Activated naive CD4-positive, alpha-beta T cell treated with anti-CD3 and anti-CD28 coated beads for 36 hours (primary cell): ENCODE measurements at regions of chr9 and their contacts with region 1.

Region 1: DNA sequence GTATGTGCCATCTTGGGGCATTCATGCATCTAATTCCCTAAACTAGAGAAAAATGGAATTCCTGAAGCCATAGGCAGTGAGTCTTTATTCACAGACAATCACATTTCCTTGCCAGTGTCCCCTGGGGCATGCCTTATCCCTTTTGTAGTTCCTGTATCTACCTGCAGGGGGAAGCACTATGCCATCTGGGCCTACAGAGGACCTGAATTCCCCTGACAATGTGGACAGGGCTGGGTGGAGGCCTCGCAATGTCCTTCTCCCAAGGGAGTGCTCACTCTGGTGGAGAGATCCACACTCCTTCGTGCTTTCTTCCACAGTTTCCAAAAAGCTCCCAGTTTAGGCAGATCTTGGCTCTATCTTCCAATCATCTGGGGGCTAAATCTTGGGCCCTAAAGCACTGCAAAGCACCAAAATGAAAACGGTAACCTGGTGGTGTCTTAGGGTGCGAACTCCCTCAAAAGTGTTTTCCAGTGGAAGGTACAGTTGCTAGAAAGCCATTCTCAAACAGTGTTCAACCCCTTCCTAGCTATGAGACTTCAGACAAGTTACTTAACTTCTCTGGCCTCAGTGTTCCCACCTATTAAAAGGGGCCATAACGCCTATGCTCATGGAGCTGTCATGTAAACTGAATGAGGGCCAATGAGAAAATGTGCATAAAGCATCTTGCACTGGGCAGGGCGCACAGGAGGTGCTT is 17.5 kb downstream of the WHRN start:
- DNase-seq: peak; percentile 81
- H3K4me3 Mint-ChIP-seq: no peak overlapping the region
- H3K27ac Mint-ChIP-seq: no peak overlapping the region
- H3K4me1 Mint-ChIP-seq: peaks cover 19% of the 10 kb centered on the region
- H3K27me3 Mint-ChIP-seq: no peaks in the 10 kb centered on the region

Region 2: DNA sequence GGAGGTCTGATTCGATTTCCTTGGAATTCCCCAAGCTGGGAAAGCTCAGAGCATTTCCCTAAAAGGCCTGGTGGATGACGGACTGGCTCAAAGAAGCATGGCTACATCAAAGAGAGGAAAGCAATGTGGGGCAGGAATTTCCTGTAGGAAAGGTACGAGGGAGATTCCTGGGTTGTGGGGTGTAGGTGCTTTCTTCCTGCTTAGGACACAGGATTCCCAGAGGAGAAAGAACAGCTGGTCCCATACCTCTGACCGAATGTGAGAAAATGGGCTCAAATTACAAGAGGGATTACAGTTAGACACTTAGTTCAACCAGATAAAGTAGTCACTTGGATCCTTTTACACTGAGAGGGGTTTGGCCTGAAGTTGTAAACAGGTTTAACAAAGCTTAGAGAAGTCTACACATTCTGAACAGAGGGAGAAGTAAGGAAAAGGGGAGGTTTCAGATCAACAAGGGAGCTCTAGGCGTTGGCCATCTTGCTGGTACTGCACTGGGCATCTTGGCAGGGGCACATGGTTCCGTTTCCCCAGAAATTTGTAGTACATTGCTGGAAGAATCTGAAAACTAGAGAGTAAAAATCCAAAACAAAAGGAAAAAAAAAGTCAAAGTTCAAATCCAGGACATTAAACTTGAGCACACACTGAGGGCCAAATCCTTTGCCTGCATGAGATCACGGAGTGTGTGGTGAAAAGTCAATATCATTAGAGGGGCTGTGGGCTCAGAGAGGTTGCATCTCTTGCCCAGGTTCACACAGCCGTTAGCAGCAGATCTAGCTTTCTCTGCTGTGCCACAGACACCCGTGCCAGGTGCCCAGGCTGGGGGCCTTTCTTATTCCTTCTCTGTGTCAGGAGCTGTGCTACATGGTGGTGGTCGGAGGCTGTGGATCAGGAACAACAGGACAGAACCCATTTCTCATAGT is 852.9 kb before region 1 on chr9:
- CTCF ChIA-PET with region 1: no interaction called
- intact Hi-C with region 1: no loop called
- DNase-seq: no peak
- H3K4me3 Mint-ChIP-seq: no peak overlapping the region
- H3K27ac Mint-ChIP-seq: no peak overlapping the region
- H3K4me1 Mint-ChIP-seq: peaks cover 2% of the 10 kb centered on the region
- H3K27me3 Mint-ChIP-seq: no peaks in the 10 kb centered on the region

Region 3: DNA sequence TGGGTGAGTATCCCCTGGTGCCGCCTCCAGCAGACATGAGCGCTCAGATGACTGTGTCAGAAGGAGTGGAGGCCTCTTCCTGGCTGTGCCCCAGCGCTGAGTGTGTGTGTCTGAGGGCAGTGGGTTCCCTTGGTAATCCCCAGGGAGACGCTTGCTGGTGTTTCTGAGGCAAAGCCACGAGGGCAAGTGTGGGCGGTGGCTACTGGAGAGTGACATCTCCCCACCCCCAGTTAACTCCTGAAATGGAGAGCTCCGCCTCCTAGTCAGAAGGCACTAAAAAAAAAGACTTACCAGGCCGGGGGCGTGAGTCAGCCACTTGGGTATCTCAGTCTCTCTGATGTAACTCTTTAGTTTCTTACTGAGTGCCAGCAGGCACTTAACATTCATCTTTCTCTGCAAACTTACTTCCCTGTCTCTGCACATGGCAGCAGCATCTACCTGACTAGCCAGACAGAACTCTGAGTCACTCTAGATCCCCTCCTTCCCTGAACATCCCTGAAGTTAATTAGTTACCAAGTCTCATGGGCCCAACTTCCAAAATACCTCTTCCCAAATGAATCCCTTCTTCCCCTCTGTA is 138.8 kb before region 1 on chr9:
- CTCF ChIA-PET with region 1: interaction called, 3 read pairs
- intact Hi-C with region 1: loop called (anchors 5 kb)
- DNase-seq: peak; percentile 98
- H3K4me3 Mint-ChIP-seq: peak overlapping the region; percentile 24
- H3K27ac Mint-ChIP-seq: peak overlapping the region; percentile 98
- H3K4me1 Mint-ChIP-seq: peaks cover 49% of the 10 kb centered on the region
- H3K27me3 Mint-ChIP-seq: no peaks in the 10 kb centered on the region

Region 4: GRCh38 chr9:114434878-114435311 is 52.9 kb before region 1 on chr9:
- CTCF ChIA-PET with region 1: interaction called, 4 read pairs
- intact Hi-C with region 1: loop called (anchors 5 kb)
- DNase-seq: peak; percentile 37
- H3K4me3 Mint-ChIP-seq: no peak overlapping the region
- H3K27ac Mint-ChIP-seq: no peak overlapping the region
- H3K4me1 Mint-ChIP-seq: peaks cover 2% of the 10 kb centered on the region
- H3K27me3 Mint-ChIP-seq: no peaks in the 10 kb centered on the region

Region 5: DNA sequence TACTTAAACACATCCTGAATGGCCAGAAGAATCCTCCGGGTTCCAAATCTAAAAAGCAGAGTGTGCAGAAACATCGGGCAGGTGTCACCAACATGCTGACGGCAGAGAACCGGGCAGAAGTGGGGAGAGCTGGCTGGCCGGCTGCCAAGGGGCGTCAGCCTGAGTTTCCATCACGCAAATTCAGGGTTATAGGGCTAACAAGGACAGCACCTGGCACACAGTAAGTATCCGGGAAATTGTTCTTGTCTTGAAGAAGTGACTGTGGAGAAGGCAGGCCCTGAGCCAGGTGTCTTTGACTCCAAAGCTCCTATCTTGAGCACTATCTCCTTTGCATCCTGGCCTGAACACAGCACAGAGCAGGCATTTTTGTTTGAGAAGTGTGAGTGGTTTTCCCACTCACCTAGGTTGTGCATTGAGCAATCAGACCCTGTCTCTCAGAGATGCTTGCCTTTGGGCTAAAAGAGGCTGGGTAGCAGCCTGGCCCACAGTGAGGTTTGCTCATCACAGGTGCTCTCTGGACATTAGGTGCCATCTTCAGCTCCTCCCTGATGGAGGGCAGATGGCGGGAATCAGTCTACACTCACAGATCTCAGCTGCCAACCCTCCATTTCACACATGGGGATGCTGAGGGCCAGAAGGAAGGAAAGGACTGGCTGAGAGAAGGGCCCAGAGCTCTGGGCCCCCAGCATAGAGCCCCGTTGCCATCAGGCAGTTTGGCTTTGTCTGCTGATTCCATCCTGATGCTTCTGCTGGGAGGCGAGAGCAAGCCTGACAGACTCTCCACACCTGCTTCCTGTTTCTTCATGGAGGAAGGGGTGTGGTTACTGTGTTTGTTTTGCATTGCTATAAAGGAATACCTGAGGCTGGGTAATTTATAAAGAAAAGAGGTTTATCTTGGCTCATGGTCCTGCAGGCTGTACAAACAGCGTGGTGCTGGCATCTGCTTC is 35.3 kb before region 1 on chr9:
- CTCF ChIA-PET with region 1: no interaction called
- intact Hi-C with region 1: loop called (anchors 1 kb)
- DNase-seq: peak; percentile 73
- H3K4me3 Mint-ChIP-seq: no peak overlapping the region
- H3K27ac Mint-ChIP-seq: peak overlapping the region; percentile 65
- H3K4me1 Mint-ChIP-seq: peaks cover 23% of the 10 kb centered on the region
- H3K27me3 Mint-ChIP-seq: no peaks in the 10 kb centered on the region

Region 6: DNA sequence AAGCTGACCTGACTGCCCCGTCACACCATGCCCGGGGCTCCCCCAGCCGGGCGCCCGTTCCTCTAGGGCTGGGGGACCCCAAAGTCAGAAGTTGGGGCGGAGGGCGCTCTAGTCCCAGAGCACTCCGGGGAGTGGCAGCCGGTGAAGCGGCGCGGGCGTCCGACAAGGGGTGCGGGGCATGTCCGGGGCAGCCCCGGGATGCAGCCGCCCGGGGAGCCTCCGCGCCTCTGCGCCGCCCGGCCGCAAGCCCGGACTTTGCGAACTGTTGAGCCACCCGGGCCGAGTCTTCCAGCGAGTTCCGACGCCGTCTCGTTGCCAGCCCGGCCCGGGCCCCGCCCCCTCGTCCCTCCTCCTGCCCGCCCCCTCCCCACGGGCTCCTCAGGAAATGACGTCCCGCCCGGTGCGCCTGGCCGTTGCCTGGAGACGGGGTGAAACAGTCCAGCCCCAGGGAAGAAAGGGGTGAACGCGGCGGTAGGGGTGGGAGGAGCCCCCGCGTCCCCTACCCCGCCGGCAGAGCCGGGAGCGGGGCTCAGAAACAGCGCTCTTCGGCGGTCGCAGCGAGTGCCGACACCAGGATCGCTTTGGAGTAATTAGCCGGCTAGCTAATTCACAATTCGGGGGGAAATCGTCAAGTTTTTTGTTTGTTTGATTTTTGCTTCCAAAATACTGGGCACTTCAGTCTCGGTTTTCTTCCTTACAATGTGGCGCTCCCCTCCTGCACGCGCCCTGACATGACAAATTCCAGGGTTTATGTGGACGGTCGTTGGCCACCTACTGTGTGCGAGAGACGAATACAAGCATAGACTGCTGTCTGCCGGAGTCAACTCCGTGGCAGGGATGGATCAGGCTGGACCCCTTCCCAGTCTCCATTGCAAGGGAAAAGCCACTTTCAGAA is 17.7 kb after region 1 on chr9 and contains the start of gene WHRN:
- CTCF ChIA-PET with region 1: interaction called, 34 read pairs
- intact Hi-C with region 1: loop called (anchors 1 kb)
- DNase-seq: peak; percentile 90
- H3K4me3 Mint-ChIP-seq: peak within 1 kb of the TSS; percentile 76
- H3K27ac Mint-ChIP-seq: no peak within 1 kb of the TSS
- H3K4me1 Mint-ChIP-seq: peaks cover 5% of the 10 kb centered on the region
- H3K27me3 Mint-ChIP-seq: peaks cover 15% of the 10 kb centered on the region
- total RNA-seq, gene WHRN: 1.9 to 2.1 TPM

Region 7: DNA sequence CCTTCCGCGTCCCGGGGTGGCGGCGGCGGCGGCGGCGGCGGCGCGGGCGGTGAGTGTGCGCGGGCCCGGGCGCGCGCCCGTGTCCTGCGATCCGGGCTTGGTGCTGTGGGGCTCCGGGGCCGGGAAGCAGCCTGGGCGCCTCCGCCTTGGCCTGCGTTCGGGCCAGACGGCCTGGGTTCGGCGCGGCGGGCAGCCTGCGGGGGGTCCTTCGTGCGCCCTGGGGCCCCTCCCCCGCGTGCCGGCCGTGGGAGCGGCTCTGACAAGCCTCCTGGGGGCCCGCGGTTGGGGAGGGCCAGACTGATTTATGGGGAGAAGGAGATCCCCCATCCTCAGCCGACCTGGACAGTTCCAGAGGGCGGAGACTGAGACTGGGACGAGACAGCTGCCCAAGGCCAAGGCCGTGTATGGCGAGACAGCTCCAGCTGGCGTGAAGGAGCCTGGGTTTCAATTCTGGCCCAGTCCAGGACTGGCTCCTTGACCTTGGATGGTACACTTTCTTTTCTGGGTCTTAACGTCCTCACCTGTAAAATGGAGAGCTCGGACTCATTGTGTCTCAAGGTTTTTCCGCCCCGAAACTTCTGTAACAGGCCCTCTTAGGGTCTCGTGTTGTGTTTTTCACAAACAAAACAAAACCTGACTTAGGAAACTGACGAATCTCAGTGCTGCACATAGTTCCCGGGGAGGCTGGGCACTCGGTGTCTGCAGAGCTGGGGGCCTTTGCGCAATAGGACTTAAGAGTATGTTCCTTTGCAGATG is 123.9 kb after region 1 on chr9:
- CTCF ChIA-PET with region 1: interaction called, 4 read pairs
- intact Hi-C with region 1: loop called (anchors 5 kb)
- DNase-seq: peak; percentile 37
- H3K4me3 Mint-ChIP-seq: peak overlapping the region; percentile 79
- H3K27ac Mint-ChIP-seq: peak overlapping the region; percentile 82
- H3K4me1 Mint-ChIP-seq: peaks cover 52% of the 10 kb centered on the region
- H3K27me3 Mint-ChIP-seq: no peaks in the 10 kb centered on the region